Activated CD8-positive, alpha-beta T cell treated with anti-CD3 and anti-CD28 coated beads for 36 hours (primary cell): ENCODE measurements at regions of chrX and their contacts with region 1.

Region 1: GRCh38 chrX:40169193-40170101 is 71.7 kb upstream of the BCOR start:
- DNase-seq: peak; percentile 92
- ATAC-seq: peak; percentile 65
- H3K4me3 Mint-ChIP-seq: peak overlapping the region; percentile 85
- H3K27ac Mint-ChIP-seq: peak overlapping the region; percentile 97
- H3K4me1 Mint-ChIP-seq: peaks cover 27% of the 10 kb centered on the region
- H3K27me3 Mint-ChIP-seq: no peaks in the 10 kb centered on the region
- CTCF ChIP-seq: peak; percentile 19

Region 2: GRCh38 chrX:39613482-39613921 is 555.9 kb before region 1 on chrX:
- CTCF ChIA-PET with region 1: no interaction called
- POLR2A ChIA-PET with region 1: no interaction called
- intact Hi-C with region 1: loop called (anchors 10 kb)
- DNase-seq: peak; percentile 17
- ATAC-seq: peak; percentile 19
- H3K4me3 Mint-ChIP-seq: peak overlapping the region; percentile 77
- H3K27ac Mint-ChIP-seq: peak overlapping the region; percentile 95
- H3K4me1 Mint-ChIP-seq: peaks cover 34% of the 10 kb centered on the region
- H3K27me3 Mint-ChIP-seq: no peaks in the 10 kb centered on the region
- CTCF ChIP-seq: no peak

Region 3: GRCh38 chrX:39859991-39860861 is 309.2 kb before region 1 on chrX:
- CTCF ChIA-PET with region 1: no interaction called
- POLR2A ChIA-PET with region 1: interaction called, 3 read pairs
- intact Hi-C with region 1: loop called (anchors 10 kb)
- DNase-seq: peak; percentile 94
- ATAC-seq: peak; percentile 66
- H3K4me3 Mint-ChIP-seq: peak overlapping the region; percentile 17
- H3K27ac Mint-ChIP-seq: peak overlapping the region; percentile 98
- H3K4me1 Mint-ChIP-seq: peaks cover 57% of the 10 kb centered on the region
- H3K27me3 Mint-ChIP-seq: no peaks in the 10 kb centered on the region
- CTCF ChIP-seq: no peak

Region 4: GRCh38 chrX:40266490-40267333 is 97.3 kb after region 1 on chrX:
- CTCF ChIA-PET with region 1: no interaction called
- POLR2A ChIA-PET with region 1: interaction called, 3 read pairs
- intact Hi-C with region 1: loop called (anchors 10 kb)
- DNase-seq: peak; percentile 58
- ATAC-seq: peak; percentile 90
- H3K4me3 Mint-ChIP-seq: peak overlapping the region; percentile 69
- H3K27ac Mint-ChIP-seq: no peak overlapping the region
- H3K4me1 Mint-ChIP-seq: peaks cover 8% of the 10 kb centered on the region
- H3K27me3 Mint-ChIP-seq: no peaks in the 10 kb centered on the region
- CTCF ChIP-seq: peak; percentile 56